B cell (primary cell): ENCODE measurements at regions of chr17 and their contacts with region 1.

Region 1: DNA sequence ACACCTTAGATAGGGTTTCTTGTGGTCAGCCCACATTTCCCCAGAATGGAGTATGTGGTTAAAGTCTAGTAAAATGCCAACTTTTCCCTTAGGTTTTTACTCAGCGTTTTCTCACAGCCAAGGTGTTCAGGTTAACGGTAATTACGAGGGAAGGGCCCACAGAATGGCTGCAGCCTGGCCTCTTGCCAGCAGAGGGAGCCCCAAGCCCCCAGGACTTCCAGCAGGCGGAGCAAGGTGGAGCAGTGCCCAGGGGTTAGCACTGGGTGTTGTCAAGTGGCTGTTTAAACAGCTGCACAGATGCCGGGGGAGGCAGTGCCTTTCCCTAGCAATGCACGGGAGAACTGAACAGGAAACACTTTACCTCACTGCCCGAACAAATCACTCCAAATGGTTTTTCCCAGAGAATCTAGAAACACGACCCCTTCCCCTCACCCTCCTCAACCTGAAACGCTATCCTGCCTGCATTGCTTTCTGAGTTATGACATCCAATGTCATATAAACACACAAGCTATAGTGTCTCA is 6.6 kb downstream of the PHB1 start:
- DNase-seq: peak; percentile 87
- ATAC-seq: peak; percentile 97
- H3K4me3 ChIP-seq: no peak overlapping the region
- H3K4me3 Mint-ChIP-seq: no peak overlapping the region
- H3K27ac ChIP-seq: no peak overlapping the region
- H3K27ac Mint-ChIP-seq: peak overlapping the region; percentile 28
- H3K4me1 ChIP-seq: peaks cover 24 to 33% of the 10 kb centered on the region in 2 donors
- H3K4me1 Mint-ChIP-seq: peaks cover 28% of the 10 kb centered on the region
- H3K27me3 ChIP-seq: no peaks in the 10 kb centered on the region
- H3K27me3 Mint-ChIP-seq: no peaks in the 10 kb centered on the region
- CTCF ChIP-seq: peak; percentile 99

Region 2: DNA sequence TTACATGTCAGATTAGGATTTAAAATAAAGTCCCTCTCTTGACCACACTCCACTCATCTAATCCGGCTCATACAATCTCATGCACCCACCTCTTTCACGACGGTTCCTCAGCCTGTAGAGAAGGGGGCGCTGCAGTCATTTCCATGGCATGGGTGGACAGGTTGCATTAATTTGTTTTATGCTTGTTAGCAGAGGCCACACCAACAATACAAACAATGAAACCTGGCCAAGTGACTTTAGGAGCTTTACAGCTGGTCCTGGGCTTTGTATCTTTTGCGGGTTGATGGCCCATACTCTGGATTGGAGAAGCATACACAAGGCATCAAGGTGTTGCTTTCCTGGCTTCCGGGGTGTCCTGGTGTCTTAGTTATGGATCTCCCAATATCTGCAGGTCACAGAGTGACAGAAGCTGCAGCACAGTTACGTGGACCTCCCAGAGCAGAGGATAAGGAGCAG is 453.7 kb before region 1 on chr17:
- CTCF ChIA-PET with region 1: no interaction called
- POLR2A ChIA-PET with region 1: no interaction called
- intact Hi-C with region 1: no loop called
- DNase-seq: no peak
- ATAC-seq: no peak
- H3K4me3 ChIP-seq: no peak overlapping the region
- H3K4me3 Mint-ChIP-seq: no peak overlapping the region
- H3K27ac ChIP-seq: no peak overlapping the region
- H3K27ac Mint-ChIP-seq: no peak overlapping the region
- H3K4me1 ChIP-seq: peaks cover 9 to 22% of the 10 kb centered on the region in 2 donors
- H3K4me1 Mint-ChIP-seq: peaks cover 11% of the 10 kb centered on the region
- H3K27me3 ChIP-seq: peaks cover 0 to 3% (median 3%) of the 10 kb centered on the region in 4 experiments
- H3K27me3 Mint-ChIP-seq: peaks cover 11% of the 10 kb centered on the region
- CTCF ChIP-seq: no peak

Region 3: GRCh38 chr17:49337884-49338283 is 70.2 kb before region 1 on chr17:
- CTCF ChIA-PET with region 1: no interaction called
- POLR2A ChIA-PET with region 1: no interaction called
- intact Hi-C with region 1: no loop called
- DNase-seq: no peak
- ATAC-seq: no peak
- H3K4me3 ChIP-seq: no peak overlapping the region
- H3K4me3 Mint-ChIP-seq: no peak overlapping the region
- H3K27ac ChIP-seq: no peak overlapping the region
- H3K27ac Mint-ChIP-seq: peak overlapping the region; percentile 50
- H3K4me1 ChIP-seq: peaks cover 28 to 38% of the 10 kb centered on the region in 2 donors
- H3K4me1 Mint-ChIP-seq: peaks cover 54% of the 10 kb centered on the region
- H3K27me3 ChIP-seq: no peaks in the 10 kb centered on the region
- H3K27me3 Mint-ChIP-seq: no peaks in the 10 kb centered on the region
- CTCF ChIP-seq: no peak

Region 4: GRCh38 chr17:49434821-49435670 is 27.0 kb after region 1 on chr17:
- CTCF ChIA-PET with region 1: interaction called, 13 read pairs
- POLR2A ChIA-PET with region 1: no interaction called
- intact Hi-C with region 1: no loop called
- DNase-seq: peak; percentile 57
- ATAC-seq: peak; percentile 33
- H3K4me3 ChIP-seq: no peak overlapping the region
- H3K4me3 Mint-ChIP-seq: no peak overlapping the region
- H3K27ac ChIP-seq: no peak overlapping the region
- H3K27ac Mint-ChIP-seq: no peak overlapping the region
- H3K4me1 ChIP-seq: peaks cover 10 to 11% of the 10 kb centered on the region in 2 donors
- H3K4me1 Mint-ChIP-seq: peaks cover 10% of the 10 kb centered on the region
- H3K27me3 ChIP-seq: peaks cover 0 to 29% (median 5%) of the 10 kb centered on the region in 4 experiments
- H3K27me3 Mint-ChIP-seq: peaks cover 39% of the 10 kb centered on the region
- CTCF ChIP-seq: peak; percentile 74

Region 5: DNA sequence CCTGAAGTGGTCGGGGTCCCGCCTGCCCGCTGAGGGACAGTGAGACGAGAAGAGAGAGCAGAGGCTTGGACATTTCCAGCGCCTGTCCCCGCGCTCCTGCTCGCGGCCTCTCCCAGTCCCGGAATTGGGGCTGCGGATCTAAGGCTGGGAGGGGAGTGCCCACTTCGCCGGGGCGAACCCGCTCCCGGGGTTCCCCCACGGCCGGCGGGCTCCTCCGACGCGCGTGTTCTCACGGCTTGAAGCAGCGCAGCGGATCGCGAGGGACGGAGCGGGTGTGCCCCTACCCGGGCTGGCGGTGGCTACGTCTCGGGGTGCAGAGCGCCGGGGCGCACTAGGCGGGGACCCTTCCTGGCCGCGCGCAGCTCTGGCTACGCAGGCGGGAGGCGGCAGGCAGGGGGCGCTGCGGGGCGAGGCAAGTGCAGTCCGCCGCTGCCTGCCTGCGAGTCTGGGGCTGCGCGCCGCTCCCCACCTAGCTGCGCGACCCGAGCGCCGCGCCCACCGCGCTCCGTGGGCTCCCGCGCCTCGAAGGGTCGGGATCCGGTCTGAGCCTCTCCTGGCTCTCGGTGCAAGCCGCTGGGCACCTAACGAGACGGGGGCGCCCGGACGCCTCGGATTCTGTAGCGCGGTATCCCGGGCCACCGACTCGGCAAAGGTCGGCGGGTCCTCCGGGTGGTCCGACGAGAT is 88.3 kb after region 1 on chr17:
- CTCF ChIA-PET with region 1: interaction called, 20 read pairs
- POLR2A ChIA-PET with region 1: no interaction called
- intact Hi-C with region 1: no loop called
- DNase-seq: peak; percentile 88
- ATAC-seq: peak; percentile 75
- H3K4me3 ChIP-seq: peak overlapping the region in 4 of 5 experiments; percentile 54 to 74 (median 58)
- H3K4me3 Mint-ChIP-seq: peak overlapping the region; percentile 87
- H3K27ac ChIP-seq: no peak overlapping the region
- H3K27ac Mint-ChIP-seq: no peak overlapping the region
- H3K4me1 ChIP-seq: peaks cover 30 to 34% of the 10 kb centered on the region in 2 donors
- H3K4me1 Mint-ChIP-seq: peaks cover 29% of the 10 kb centered on the region
- H3K27me3 ChIP-seq: peaks cover 0 to 53% (median 43%) of the 10 kb centered on the region in 4 experiments
- H3K27me3 Mint-ChIP-seq: peaks cover 41% of the 10 kb centered on the region
- CTCF ChIP-seq: peak; percentile 92